Astrocyte of the cerebellum (primary cell): ENCODE measurements at regions of chr16 and their contacts with region 1.

Region 1: GRCh38 chr16:11356573-11357331 is 11.5 kb downstream of the RMI2 start:
- DNase-seq: no peak
- H3K4me3 ChIP-seq: no peak overlapping the region
- CTCF ChIP-seq: peak; percentile 81

Region 2: GRCh38 chr16:11051879-11052808 is 304.6 kb before region 1 on chr16:
- in situ Hi-C with region 1: loop called (anchors 25 kb)
- DNase-seq: no peak
- H3K4me3 ChIP-seq: no peak overlapping the region
- CTCF ChIP-seq: no peak

Region 3: DNA sequence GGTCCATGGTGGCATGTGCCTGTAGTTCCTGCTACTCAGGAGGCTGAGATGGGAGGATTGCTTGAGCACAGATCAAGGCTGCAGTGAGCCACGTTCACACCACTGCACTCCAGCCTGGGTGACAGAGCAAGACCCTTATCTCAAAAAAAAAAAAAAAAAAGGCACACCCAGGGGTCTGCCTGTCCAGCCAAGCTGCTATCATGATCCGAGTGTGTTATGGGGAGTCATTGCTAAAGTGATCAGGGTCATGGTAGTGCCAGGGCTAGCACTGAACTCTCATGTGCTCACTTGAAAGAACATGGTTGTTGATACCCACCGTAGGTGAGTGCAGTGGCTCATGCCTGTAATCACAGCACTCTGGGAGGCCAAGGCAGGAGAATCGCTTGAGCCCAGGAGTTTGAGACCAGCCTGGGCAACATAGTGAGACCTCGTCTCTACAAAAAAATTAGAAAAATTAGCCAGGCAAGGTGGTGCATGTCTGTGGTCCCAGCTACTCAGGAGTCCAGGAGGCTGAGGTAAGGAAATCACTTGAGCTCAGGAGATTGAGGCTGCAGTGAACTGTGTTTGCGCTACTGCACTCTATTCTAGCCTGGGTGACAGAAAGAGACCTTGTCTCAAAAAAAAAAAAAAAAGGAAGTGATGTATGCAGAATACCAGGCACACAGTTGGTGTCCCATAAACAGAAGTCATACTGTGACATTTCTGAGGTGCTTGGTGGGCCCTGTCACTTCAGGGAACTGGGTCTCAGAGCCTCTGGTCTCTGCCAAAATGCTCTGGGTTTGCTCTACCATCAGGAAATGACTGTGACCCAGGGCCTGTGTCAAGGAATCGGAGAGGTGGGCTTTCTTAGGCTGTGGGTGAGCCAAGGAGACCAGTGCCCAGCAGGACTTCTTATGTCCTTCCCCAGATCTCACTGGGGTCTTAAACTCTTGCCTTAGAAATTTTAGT is 77.8 kb before region 1 on chr16:
- in situ Hi-C with region 1: loop called (anchors 5 kb)
- DNase-seq: no peak
- H3K4me3 ChIP-seq: no peak overlapping the region
- CTCF ChIP-seq: no peak

Region 4: GRCh38 chr16:11396241-11397048 is 39.7 kb after region 1 on chr16:
- in situ Hi-C with region 1: no loop called
- DNase-seq: no peak
- H3K4me3 ChIP-seq: no peak overlapping the region
- CTCF ChIP-seq: peak; percentile 98